Calu3 (cell line): ENCODE measurements at regions of chrX and their contacts with region 1.

Region 1: GRCh38 chrX:153507484-153508178 is 9.8 kb upstream of the ATP2B3 start:
- DNase-seq: peak; percentile 87
- H3K4me3 Mint-ChIP-seq: peak overlapping the region; percentile 19
- H3K27ac Mint-ChIP-seq: no peak overlapping the region
- H3K4me1 Mint-ChIP-seq: no peaks in the 10 kb centered on the region
- H3K27me3 Mint-ChIP-seq: peaks cover 45% of the 10 kb centered on the region
- CTCF ChIP-seq: peak; percentile 81

Region 2: DNA sequence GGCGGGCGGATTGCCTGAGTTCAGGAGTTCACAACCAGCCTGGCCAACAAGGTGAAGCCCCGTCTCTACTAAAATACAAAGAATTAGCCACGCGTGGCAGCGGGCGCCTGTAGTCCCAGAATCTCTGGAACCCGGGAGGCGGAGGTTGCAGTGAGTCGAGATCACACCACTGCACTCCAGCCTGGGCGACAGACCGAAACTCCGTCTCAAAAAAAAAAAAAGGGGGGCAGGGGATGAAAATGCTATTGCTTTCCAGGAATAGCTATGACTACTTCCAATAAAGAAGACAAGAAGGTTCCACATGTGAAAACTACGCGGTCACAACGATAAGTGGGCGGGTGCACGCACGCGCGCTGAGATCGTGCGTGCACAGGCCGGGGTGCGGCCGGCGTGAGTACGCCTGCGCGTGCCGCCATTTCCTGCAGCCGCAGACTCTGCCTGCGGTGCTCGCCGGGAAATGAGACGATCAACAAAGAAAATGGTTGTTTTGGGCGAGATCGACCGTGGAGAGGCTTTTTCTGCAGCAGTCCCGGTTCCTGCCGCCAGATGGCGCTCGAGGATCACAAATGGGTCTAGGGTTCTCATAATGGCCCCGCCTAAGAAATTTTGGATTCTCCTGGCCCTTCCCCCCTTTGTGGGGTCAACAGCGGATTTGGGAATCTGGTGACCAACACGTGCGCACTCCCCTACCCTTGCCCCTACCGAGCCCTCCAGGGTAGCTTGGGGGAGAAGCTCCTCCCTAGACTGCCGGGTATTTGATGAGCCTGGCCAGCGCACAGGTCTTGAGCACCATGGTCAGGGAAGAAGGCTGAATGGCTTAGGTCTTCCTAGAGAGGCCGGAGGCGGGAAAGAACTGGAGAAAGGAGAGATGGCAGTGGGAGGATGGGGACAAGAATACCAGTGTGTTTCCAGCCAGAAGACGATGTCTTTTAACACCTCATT is 548.8 kb before region 1 on chrX:
- CTCF ChIA-PET with region 1: no interaction called
- intact Hi-C with region 1: loop called (anchors 5 kb)
- DNase-seq: peak; percentile 78
- H3K4me3 Mint-ChIP-seq: peak overlapping the region; percentile 52
- H3K27ac Mint-ChIP-seq: no peak overlapping the region
- H3K4me1 Mint-ChIP-seq: no peaks in the 10 kb centered on the region
- H3K27me3 Mint-ChIP-seq: no peaks in the 10 kb centered on the region
- CTCF ChIP-seq: peak; percentile 84

Region 3: DNA sequence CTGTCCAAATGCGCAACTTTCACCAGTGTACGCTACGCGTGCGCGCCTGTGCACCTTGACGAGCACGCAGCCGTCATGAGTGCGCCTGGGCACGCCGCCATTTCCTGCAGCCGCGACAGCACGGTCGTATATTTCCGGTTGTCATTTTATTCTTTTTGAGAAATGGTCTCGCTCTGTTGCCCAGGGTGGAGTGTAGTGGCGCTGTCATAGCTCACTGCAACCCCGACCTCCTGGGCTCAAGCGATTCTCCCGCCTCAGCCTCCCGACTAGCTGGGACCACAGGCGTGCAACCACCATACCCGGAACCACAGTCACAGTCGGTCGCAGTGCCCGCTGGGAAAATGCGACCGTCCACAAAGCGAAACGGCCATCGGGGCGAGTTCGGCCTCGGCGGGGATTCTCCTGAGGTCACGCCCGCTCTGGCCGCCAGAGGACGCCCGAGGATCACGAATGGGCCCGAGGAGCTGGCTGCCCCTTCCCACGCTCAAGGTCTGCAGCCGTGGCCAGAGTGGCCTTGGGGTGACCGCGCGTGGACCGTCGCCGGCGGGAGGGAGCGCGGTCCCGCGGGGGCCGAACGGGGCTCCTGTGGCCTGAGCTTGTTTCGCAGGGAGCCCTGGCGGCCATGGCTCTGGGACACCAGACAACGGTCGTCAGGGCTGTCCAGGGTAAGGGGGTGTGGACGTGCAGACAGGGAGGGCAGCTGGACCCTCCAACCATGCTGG is 475.1 kb before region 1 on chrX:
- CTCF ChIA-PET with region 1: no interaction called
- intact Hi-C with region 1: loop called (anchors 10 kb)
- DNase-seq: peak; percentile 76
- H3K4me3 Mint-ChIP-seq: no peak overlapping the region
- H3K27ac Mint-ChIP-seq: no peak overlapping the region
- H3K4me1 Mint-ChIP-seq: no peaks in the 10 kb centered on the region
- H3K27me3 Mint-ChIP-seq: peaks cover 60% of the 10 kb centered on the region
- CTCF ChIP-seq: peak; percentile 88

Region 4: DNA sequence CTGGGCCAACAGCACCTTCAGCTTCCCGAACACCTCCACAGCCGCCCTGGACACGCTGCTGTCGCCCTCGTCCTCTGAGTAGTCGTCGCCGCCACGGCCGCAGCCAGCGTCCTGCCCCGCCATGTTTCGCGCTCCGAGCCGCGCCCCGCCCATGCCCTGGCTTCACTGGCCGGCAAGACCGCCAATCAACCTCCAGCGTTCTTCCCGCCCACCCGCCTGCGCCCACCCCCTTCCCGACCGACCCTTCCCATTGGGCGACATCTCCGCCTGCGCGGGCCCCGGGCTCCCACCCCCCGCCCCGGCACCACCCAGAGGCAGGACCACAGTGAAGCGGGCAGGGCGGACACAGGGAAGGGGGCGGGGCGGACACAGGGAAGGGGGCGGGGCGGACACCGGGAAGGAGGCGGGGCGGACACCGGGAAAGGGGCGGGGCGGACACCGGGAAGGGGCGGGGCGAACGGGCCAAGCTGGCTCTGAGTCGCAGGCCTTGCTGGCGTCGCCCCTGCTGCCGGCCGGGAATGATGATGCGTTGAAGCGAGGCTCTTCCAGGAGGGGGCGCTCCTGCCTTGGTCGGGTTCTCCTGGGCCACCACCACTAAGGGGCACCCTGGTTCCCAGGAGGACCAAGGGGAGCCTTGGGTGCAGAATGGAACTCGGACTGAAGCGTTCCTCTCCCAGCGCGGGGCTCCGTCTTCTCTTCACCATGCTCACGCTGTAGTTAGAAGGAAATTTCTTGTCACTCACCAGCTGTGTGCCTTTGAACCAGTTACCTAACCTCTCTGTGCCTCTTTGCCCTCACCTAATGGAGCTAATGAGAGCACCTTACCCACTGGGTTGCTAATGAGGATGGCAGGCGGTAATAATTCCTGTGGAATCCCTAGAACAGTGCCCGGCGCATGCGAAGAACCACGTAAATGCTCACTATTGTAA is 36.9 kb before region 1 on chrX and contains the start of gene HAUS7:
- CTCF ChIA-PET with region 1: no interaction called
- intact Hi-C with region 1: loop called (anchors 1 kb)
- DNase-seq: peak; percentile 89
- H3K4me3 Mint-ChIP-seq: peak within 1 kb of the TSS; percentile 73
- H3K27ac Mint-ChIP-seq: peak within 1 kb of the TSS; percentile 23
- H3K4me1 Mint-ChIP-seq: no peaks in the 10 kb centered on the region
- H3K27me3 Mint-ChIP-seq: peaks cover 30% of the 10 kb centered on the region
- CTCF ChIP-seq: peak; percentile 47
- total RNA-seq, gene HAUS7: 38.6 and 40.7 TPM in 2 replicates